Activated naive CD4-positive, alpha-beta T cell treated with anti-CD3 and anti-CD28 coated beads, Interleukin-2, amount 10 ng/mL, durations not matched to agents 7 days and 5 days (primary cell): ENCODE measurements at regions of chr6 and their contacts with region 1.

Region 1: DNA sequence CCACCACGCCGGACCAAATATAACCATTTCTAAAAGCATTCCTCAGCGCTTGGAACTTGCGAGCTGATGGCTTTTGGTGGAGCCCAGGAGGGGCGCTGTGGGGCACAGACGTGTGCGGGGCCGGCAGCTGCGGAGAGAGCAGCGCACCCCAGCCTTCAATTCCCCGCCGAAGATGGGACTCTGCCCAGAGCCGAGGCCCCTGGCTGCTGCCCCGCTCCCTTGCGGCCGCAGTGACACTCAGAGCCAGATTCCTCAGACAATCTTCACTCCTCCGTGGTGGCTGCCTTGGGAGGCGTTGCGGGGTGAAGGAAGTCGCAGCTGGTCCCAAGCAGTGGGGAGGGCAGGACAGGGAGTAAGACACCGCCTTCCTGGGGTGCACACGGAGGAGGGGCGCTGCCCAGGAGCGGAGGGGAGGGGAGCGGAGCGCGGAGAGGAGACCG is 87.7 kb downstream of the TMEM242 start:
- DNase-seq: peak; percentile 68
- H3K4me3 Mint-ChIP-seq: peak overlapping the region; percentile 88
- H3K27ac Mint-ChIP-seq: no peak overlapping the region
- H3K4me1 Mint-ChIP-seq: peaks cover 34% of the 10 kb centered on the region
- H3K27me3 Mint-ChIP-seq: peaks cover 79% of the 10 kb centered on the region

Region 2: GRCh38 chr6:157274471-157275226 is 39.0 kb after region 1 on chr6:
- CTCF ChIA-PET with region 1: interaction called, 15 read pairs
- DNase-seq: peak; percentile 90
- H3K4me3 Mint-ChIP-seq: peak overlapping the region; percentile 85
- H3K27ac Mint-ChIP-seq: peak overlapping the region; percentile 91
- H3K4me1 Mint-ChIP-seq: peaks cover 14% of the 10 kb centered on the region
- H3K27me3 Mint-ChIP-seq: peaks cover 47% of the 10 kb centered on the region